Activated naive CD4-positive, alpha-beta T cell treated with anti-CD3 and anti-CD28 coated beads for 36 hours (primary cell): ENCODE measurements at regions of chr5 and their contacts with region 1.

Region 1: DNA sequence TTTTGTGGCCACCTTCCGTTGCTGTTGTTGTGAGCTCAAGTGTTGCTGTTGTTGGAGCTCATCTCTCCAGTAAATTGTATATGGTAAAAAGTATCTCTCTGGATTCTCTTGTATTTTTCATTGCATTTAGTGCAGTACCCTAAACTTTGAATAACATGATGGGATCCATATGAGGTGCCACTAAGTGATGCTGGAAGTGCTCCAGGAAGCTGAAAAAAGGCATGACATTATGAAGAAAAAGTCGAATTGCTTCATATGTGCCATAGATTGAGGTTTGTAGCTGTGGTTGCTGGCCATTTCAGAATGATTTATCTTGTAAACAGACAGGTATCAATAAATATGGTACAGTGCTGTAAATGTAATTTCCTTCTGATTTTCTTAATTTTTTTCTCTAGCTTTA is 5.5 kb downstream of the MARCHF6 start:
- DNase-seq: no peak
- H3K4me3 Mint-ChIP-seq: no peak overlapping the region
- H3K27ac Mint-ChIP-seq: no peak overlapping the region
- H3K4me1 Mint-ChIP-seq: peaks cover 64% of the 10 kb centered on the region
- H3K27me3 Mint-ChIP-seq: no peaks in the 10 kb centered on the region

Region 2: DNA sequence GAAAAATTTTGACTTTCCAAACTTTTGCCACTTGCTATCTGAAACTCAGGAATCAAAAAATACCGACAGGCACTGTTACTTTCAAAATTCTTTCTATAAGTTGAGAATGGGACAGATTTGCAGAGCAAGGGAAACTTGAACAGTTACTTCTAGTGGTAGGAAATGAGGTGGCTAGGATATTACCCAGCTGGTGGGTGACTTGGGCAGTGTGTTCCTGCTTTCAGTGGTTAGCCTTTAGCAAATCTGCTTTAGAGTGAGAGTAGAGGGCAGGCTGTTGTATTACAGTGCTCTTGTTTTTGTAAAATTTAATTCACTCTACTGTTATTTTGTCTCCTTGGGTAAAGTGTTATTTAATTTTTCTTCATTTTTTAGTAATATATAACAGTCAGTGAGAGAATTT is 42.5 kb after region 1 on chr5:
- CTCF ChIA-PET with region 1: no interaction called
- intact Hi-C with region 1: loop called (anchors 1 kb)
- DNase-seq: no peak
- H3K4me3 Mint-ChIP-seq: no peak overlapping the region
- H3K27ac Mint-ChIP-seq: no peak overlapping the region
- H3K4me1 Mint-ChIP-seq: no peaks in the 10 kb centered on the region
- H3K27me3 Mint-ChIP-seq: no peaks in the 10 kb centered on the region